ENCODE measurements at regions of chr2 and their contacts with region 1.

Region 1: DNA sequence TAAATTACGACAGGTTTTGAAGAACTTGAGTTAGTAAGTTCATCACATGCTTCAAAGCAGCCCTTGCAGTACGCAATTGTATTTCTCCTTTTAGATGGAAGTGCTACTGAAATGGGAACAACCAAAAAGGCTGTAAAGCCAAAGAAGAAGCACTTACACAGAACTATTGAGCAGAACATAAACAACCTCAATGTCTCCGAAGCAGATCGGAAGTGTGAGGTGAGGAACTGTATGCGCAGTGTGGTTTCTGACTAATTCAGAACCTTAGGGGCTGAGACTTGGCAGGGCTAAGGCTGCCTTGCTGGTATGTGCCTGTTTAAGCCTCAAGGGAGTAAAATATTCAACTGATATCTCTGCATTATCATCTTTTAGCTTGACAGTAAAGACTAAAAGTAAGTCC is 8.4 kb downstream of the NCAPH start:
- DNase-seq: peak; percentile 60
- H3K4me3 Mint-ChIP-seq: peak overlapping the region; percentile 45
- H3K27ac Mint-ChIP-seq: peak overlapping the region; percentile 66
- H3K4me1 Mint-ChIP-seq: peaks cover 72% of the 10 kb centered on the region
- H3K27me3 Mint-ChIP-seq: no peaks in the 10 kb centered on the region

Region 2: GRCh38 chr2:96265840-96266679 is 78.0 kb before region 1 on chr2 and contains the starts of genes CIAO1 and TMEM127:
- intact Hi-C with region 1: loop called (anchors 5 kb)
- DNase-seq: peak; percentile 99
- H3K4me3 Mint-ChIP-seq: peak within 1 kb of the TSS; percentile 100
- H3K27ac Mint-ChIP-seq: peak within 1 kb of the TSS; percentile 98
- H3K4me1 Mint-ChIP-seq: peaks cover 32% of the 10 kb centered on the region
- H3K27me3 Mint-ChIP-seq: no peaks in the 10 kb centered on the region
- total RNA-seq, gene CIAO1: 93.9 and 94.7 TPM in 2 replicates
- total RNA-seq, gene TMEM127: 29.0 and 30.4 TPM in 2 replicates

Region 3: GRCh38 chr2:96320728-96321622 is 23.0 kb before region 1 on chr2:
- intact Hi-C with region 1: loop called (anchors 1 kb)
- DNase-seq: no peak
- H3K4me3 Mint-ChIP-seq: peak overlapping the region; percentile 88
- H3K27ac Mint-ChIP-seq: peak overlapping the region; percentile 86
- H3K4me1 Mint-ChIP-seq: peaks cover 54% of the 10 kb centered on the region
- H3K27me3 Mint-ChIP-seq: no peaks in the 10 kb centered on the region

Region 4: GRCh38 chr2:96485751-96486651 is 142.0 kb after region 1 on chr2:
- intact Hi-C with region 1: loop called (anchors 5 kb)
- DNase-seq: peak; percentile 87
- H3K4me3 Mint-ChIP-seq: peak overlapping the region; percentile 90
- H3K27ac Mint-ChIP-seq: peak overlapping the region; percentile 98
- H3K4me1 Mint-ChIP-seq: peaks cover 47% of the 10 kb centered on the region
- H3K27me3 Mint-ChIP-seq: no peaks in the 10 kb centered on the region

Region 5: DNA sequence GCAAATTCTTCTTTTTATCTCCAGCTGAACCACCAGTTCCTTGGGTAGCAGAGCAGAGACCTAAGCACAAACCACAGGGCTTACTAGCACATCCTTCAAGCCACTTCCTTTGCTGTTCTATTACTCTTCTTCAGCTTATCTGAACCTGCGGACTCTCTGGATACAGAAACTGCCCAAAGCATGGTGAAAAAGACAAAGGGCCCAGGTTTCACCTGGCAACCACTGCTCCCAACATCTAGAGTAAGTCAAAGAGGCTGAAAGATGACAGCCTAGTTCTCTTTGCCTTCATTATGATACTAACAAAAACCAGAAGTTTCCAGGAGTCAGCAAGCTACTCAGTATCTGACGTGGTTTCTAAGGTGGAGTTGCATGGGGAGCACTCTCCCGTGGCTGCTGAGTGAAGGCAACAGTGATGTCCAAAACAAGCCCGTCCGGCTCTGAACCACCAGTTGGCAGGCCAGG is 250.7 kb after region 1 on chr2:
- intact Hi-C with region 1: loop called (anchors 10 kb)
- DNase-seq: peak; percentile 35
- H3K4me3 Mint-ChIP-seq: peak overlapping the region; percentile 15
- H3K27ac Mint-ChIP-seq: peak overlapping the region; percentile 94
- H3K4me1 Mint-ChIP-seq: peaks cover 46% of the 10 kb centered on the region
- H3K27me3 Mint-ChIP-seq: no peaks in the 10 kb centered on the region

Measured in activated T-helper 2 cell treated with anti-CD3 and anti-CD28 coated beads, Interferon-gamma antibody, Interleukin-2, Interleukin-4, amounts not matched to agents 10 μg/mL and 5 μg/mL and 100 μg/mL, durations not matched to agents 14 hours and 24 hours and 36 hours (primary cell).